IMR-90 (cell line): ENCODE measurements at regions of chr13 and their contacts with region 1.

Region 1: GRCh38 chr13:42039946-42040729 is 8.3 kb upstream of the DGKH start:
- DNase-seq: peak; percentile 86
- ATAC-seq: peak; percentile 87
- H3K4me3 ChIP-seq: peak overlapping the region; percentile 95
- H3K27ac ChIP-seq: peak overlapping the region; percentile 71
- H3K4me1 ChIP-seq: peaks cover 8% of the 10 kb centered on the region
- H3K27me3 ChIP-seq: no peaks in the 10 kb centered on the region
- CTCF ChIP-seq: 0 out of 2 replicates have a peak, but pooled peaks have one; percentile 10
- POLR2A ChIP-seq: peak; percentile 96
- RAD21 ChIP-seq: no peak

Region 2: DNA sequence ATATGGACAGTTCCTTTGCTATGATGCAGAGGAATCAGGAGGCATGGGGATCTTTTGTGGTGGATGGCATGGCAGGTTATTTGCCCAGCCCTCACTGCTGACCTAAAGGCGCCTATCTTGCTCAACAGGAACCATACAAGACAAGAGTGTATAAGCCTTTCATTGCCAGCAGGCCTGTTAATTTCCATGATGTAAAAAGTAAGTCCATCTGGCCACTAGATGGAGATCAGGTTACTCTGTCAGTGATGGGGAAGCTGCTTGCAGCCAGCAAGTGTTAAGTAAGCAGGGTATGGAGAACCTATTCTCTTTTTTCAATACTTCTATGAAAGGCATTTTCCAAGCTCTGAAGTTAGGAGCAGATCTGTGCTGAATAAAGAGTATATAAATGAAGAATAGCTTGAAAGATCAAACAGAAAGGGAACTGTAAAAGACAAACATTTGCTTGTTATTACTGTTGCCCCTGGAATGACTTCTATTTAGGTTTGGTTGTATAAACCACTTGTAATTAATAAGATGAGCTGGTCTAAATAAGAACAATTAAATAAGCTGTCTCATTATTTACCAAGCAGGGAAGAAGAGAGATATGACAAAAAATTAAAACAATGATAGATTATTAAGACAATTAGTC is 371.9 kb before region 1 on chr13:
- CTCF ChIA-PET with region 1: interaction called, 4 read pairs
- POLR2A ChIA-PET with region 1: no interaction called
- dilution Hi-C with region 1: no loop called
- in situ Hi-C with region 1: loop called (anchors 10 kb)
- intact Hi-C with region 1: loop called (anchors 1 kb)
- DNase-seq: peak; percentile 95
- ATAC-seq: peak; percentile 99
- H3K4me3 ChIP-seq: no peak overlapping the region
- H3K27ac ChIP-seq: no peak overlapping the region
- H3K4me1 ChIP-seq: no peaks in the 10 kb centered on the region
- H3K27me3 ChIP-seq: no peaks in the 10 kb centered on the region
- CTCF ChIP-seq: peak; percentile 92
- POLR2A ChIP-seq: no peak
- RAD21 ChIP-seq: peak; percentile 99

Region 3: DNA sequence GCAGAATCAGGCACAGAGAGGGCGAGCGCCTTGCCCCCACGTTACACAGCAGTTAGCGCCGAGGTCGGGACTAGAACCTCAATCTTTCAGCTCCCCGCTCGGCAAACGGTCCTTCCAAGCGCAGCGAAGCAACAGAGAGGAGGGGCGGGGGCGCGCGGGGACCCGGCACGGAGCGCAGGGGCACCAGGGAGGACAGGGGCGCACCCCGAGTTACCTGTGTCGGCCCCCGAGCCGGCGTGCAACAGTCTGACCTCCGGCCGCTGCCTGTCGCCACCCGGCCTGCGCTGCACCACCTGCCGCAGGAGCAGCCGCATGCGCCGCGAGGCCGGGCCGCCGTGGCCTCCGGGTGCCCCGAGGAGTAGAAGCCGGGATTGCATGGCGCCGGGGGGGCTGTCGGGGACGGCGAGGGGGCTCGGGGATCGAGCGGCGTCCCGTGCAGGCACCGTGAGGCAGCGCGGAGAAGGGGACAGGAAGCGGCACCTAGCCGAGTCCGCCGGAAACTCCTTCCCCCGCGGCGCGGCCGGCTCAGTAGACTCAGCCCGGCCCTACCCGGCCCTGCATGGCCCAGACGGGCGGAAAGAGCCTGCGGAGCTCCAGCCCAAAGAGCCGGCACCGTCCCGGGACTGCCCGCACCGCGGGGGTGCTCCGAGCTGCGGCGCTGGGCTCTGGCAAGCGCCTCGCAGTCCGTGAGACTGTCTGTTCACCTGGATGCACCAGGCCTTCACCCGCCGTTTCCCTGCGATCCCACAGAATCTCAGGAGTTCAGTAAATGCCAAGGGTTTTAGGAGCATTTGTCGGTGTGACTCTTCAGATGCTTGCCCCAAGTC is 79.3 kb before region 1 on chr13 and contains the start of gene VWA8:
- CTCF ChIA-PET with region 1: no interaction called
- POLR2A ChIA-PET with region 1: no interaction called
- dilution Hi-C with region 1: no loop called
- in situ Hi-C with region 1: loop called (anchors 10 kb)
- intact Hi-C with region 1: loop called (anchors 2 kb)
- DNase-seq: peak; percentile 78
- ATAC-seq: peak; percentile 95
- H3K4me3 ChIP-seq: peak within 1 kb of the TSS; percentile 82
- H3K27ac ChIP-seq: peak within 1 kb of the TSS; percentile 96
- H3K4me1 ChIP-seq: peaks cover 3% of the 10 kb centered on the region; the same call in 1 of the 2 replicates
- H3K27me3 ChIP-seq: no peaks in the 10 kb centered on the region
- CTCF ChIP-seq: no peak
- POLR2A ChIP-seq: no peak
- RAD21 ChIP-seq: no peak; the same call in 1 of the 2 replicates
- total RNA-seq, gene VWA8: 18.3 and 19.7 TPM in 2 replicates

Region 4: GRCh38 chr13:42110410-42111155 is 70.4 kb after region 1 on chr13:
- CTCF ChIA-PET with region 1: no interaction called
- POLR2A ChIA-PET with region 1: no interaction called
- dilution Hi-C with region 1: no loop called
- in situ Hi-C with region 1: no loop called
- intact Hi-C with region 1: loop called (anchors 2 kb)
- DNase-seq: peak; percentile 82
- ATAC-seq: peak; percentile 67
- H3K4me3 ChIP-seq: no peak overlapping the region
- H3K27ac ChIP-seq: no peak overlapping the region
- H3K4me1 ChIP-seq: peaks cover 3% of the 10 kb centered on the region; the same call in 1 of the 2 replicates
- H3K27me3 ChIP-seq: no peaks in the 10 kb centered on the region
- CTCF ChIP-seq: peak; percentile 84
- POLR2A ChIP-seq: no peak
- RAD21 ChIP-seq: peak; percentile 88

Region 5: GRCh38 chr13:42328672-42329071 is 288.5 kb after region 1 on chr13:
- CTCF ChIA-PET with region 1: no interaction called
- POLR2A ChIA-PET with region 1: no interaction called
- dilution Hi-C with region 1: no loop called
- in situ Hi-C with region 1: no loop called
- intact Hi-C with region 1: no loop called
- DNase-seq: no peak
- ATAC-seq: no peak
- H3K4me3 ChIP-seq: no peak overlapping the region
- H3K27ac ChIP-seq: no peak overlapping the region
- H3K4me1 ChIP-seq: no peaks in the 10 kb centered on the region
- H3K27me3 ChIP-seq: no peaks in the 10 kb centered on the region
- CTCF ChIP-seq: no peak
- POLR2A ChIP-seq: no peak
- RAD21 ChIP-seq: no peak